Activated CD8-positive, alpha-beta T cell treated with anti-CD3 and anti-CD28 coated beads, Interleukin-2, amount 10 ng/mL, durations not matched to agents 7 days and 5 days (primary cell): ENCODE measurements at regions of chr7 and their contacts with region 1.

Region 1: DNA sequence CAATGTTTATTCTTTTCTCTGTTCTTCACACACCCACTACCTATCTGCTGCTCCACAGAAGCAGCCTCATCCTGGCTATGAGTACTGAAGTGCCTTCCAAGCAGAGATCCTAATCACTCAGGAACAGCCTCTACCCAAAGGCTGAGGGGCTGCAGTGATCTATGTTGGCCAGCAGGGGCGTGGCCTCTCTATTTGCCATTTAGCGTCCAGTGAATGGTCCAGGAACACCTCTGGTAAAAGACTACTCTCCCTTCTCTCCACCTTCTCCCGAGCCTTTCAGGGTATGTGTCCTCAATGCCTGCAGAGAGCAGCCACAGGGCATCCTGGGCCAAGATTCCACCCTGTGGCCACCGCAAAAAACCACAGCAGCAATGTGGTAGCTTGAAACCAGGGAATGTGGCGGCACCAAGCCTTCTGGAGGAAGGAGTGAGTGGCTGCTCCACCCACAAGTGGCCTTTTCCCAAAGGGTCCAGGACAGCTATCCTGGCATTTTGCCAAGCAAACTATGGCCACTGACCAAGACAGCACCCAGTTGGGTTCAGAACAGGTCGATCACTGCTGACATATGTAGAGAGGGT is 70.9 kb downstream of the SYPL1 start:
- DNase-seq: peak; percentile 45
- ATAC-seq: peak; percentile 29
- H3K4me3 Mint-ChIP-seq: no peak overlapping the region
- H3K27ac Mint-ChIP-seq: no peak overlapping the region
- H3K4me1 Mint-ChIP-seq: peaks cover 12% of the 10 kb centered on the region
- H3K27me3 Mint-ChIP-seq: peaks cover 27% of the 10 kb centered on the region

Region 2: GRCh38 chr7:105896407-105896911 is 144.8 kb before region 1 on chr7:
- CTCF ChIA-PET with region 1: no interaction called
- POLR2A ChIA-PET with region 1: no interaction called
- DNase-seq: no peak
- ATAC-seq: no peak
- H3K4me3 Mint-ChIP-seq: no peak overlapping the region
- H3K27ac Mint-ChIP-seq: no peak overlapping the region
- H3K4me1 Mint-ChIP-seq: no peaks in the 10 kb centered on the region
- H3K27me3 Mint-ChIP-seq: no peaks in the 10 kb centered on the region

Region 3: DNA sequence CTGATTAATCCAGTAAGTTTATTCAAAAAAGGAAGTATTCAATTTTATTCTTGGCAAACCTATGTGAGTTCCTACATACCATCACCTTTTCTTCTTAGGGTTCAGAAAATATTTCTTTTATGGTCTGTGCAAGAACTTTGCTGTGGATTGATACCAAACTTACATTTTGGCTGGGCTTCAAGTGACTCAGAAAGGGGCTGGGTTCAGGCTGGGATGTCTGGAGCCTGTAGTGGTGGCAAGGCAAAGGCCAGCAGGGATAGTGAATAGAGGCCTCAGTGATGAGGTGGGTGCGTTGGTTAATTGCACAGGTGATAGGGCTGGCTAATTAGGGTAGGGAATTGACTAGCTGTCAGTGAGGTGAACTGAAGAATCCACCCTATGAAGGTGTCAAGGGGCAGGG is 124.6 kb before region 1 on chr7:
- CTCF ChIA-PET with region 1: no interaction called
- POLR2A ChIA-PET with region 1: no interaction called
- DNase-seq: no peak
- ATAC-seq: no peak
- H3K4me3 Mint-ChIP-seq: no peak overlapping the region
- H3K27ac Mint-ChIP-seq: no peak overlapping the region
- H3K4me1 Mint-ChIP-seq: no peaks in the 10 kb centered on the region
- H3K27me3 Mint-ChIP-seq: no peaks in the 10 kb centered on the region

Region 4: GRCh38 chr7:105934572-105935185 is 106.5 kb before region 1 on chr7:
- CTCF ChIA-PET with region 1: interaction called, 15 read pairs
- POLR2A ChIA-PET with region 1: no interaction called
- DNase-seq: no peak
- ATAC-seq: no peak
- H3K4me3 Mint-ChIP-seq: no peak overlapping the region
- H3K27ac Mint-ChIP-seq: no peak overlapping the region
- H3K4me1 Mint-ChIP-seq: no peaks in the 10 kb centered on the region
- H3K27me3 Mint-ChIP-seq: peaks cover 7% of the 10 kb centered on the region

Region 5: DNA sequence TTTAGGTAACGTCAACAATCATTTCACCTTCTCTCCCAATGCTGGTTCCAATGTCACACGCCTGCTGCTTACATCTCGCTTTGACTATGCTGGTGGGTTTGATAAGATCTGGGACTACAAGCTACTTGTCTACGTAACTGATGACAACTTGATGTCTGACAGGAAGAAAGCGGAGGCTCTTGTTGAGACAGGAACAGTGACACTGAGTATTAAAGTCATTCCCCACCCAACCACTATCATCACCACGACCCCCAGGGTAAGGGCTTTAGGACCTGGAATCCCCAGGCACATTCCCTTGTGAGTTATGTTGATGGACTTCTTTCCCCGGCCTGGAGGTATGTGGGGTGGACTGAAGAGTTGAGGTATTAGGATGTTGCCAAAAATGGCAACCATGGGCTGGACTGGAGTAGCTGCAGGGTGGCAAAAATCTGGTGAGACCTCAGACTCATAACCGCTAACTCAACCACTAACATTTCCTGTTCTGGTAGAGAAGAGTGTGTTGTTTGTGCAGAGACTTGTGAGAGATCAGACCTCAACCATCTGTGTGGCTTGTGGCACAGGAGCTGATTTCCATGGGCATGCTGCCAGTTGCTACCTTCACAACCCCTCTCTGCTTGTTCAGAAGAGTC is 18.9 kb before region 1 on chr7:
- CTCF ChIA-PET with region 1: interaction called, 48 read pairs
- POLR2A ChIA-PET with region 1: no interaction called
- DNase-seq: peak; percentile 79
- ATAC-seq: peak; percentile 82
- H3K4me3 Mint-ChIP-seq: peak overlapping the region; percentile 8
- H3K27ac Mint-ChIP-seq: peak overlapping the region; percentile 73
- H3K4me1 Mint-ChIP-seq: peaks cover 48% of the 10 kb centered on the region
- H3K27me3 Mint-ChIP-seq: peaks cover 39% of the 10 kb centered on the region